PC-9 (cell line): ENCODE measurements at regions of chr3 and their contacts with region 1.

Region 1: GRCh38 chr3:25648107-25648535 is 16.6 kb downstream of the TOP2B start:
- DNase-seq: peak; percentile 48 to 53
- H3K4me3 ChIP-seq: no peak overlapping the region
- H3K27ac ChIP-seq: no peak overlapping the region
- H3K4me1 ChIP-seq: no peaks in the 10 kb centered on the region
- H3K27me3 ChIP-seq: no peaks in the 10 kb centered on the region
- CTCF ChIP-seq: peak; percentile 94

Region 2: DNA sequence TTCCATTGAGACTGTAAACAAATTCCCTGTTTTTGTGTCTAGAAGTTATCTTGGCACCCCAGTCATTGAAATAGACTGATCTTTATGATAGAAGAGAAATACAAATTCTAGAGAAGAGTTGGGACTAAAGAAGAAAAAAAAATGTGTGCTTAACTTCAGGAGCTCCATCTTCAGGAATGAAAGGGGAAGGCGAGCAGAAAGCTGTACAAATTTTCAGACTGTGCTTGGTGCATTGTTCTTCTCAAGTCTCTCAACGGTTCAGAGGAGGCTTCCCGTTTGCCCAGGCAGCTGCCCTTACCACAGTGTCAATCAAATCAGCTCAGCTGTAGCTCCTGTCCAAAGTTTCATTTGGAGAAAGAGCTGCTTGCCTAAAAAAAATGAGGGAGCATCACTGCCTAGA is 183.5 kb after region 1 on chr3:
- CTCF ChIA-PET with region 1: no interaction called
- POLR2A ChIA-PET with region 1: no interaction called
- intact Hi-C with region 1: loop called (anchors 5 kb)
- DNase-seq: no peak
- H3K4me3 ChIP-seq: no peak overlapping the region
- H3K27ac ChIP-seq: no peak overlapping the region
- H3K4me1 ChIP-seq: no peaks in the 10 kb centered on the region
- H3K27me3 ChIP-seq: no peaks in the 10 kb centered on the region
- CTCF ChIP-seq: no peak; the same call in 1 of the 2 replicates

Region 3: GRCh38 chr3:25856902-25857518 is 208.9 kb after region 1 on chr3:
- CTCF ChIA-PET with region 1: no interaction called
- POLR2A ChIA-PET with region 1: no interaction called
- intact Hi-C with region 1: loop called (anchors 2 kb)
- DNase-seq: no peak
- H3K4me3 ChIP-seq: no peak overlapping the region
- H3K27ac ChIP-seq: no peak overlapping the region
- H3K4me1 ChIP-seq: peaks cover 24% of the 10 kb centered on the region
- H3K27me3 ChIP-seq: no peaks in the 10 kb centered on the region
- CTCF ChIP-seq: peak; percentile 70

Region 4: DNA sequence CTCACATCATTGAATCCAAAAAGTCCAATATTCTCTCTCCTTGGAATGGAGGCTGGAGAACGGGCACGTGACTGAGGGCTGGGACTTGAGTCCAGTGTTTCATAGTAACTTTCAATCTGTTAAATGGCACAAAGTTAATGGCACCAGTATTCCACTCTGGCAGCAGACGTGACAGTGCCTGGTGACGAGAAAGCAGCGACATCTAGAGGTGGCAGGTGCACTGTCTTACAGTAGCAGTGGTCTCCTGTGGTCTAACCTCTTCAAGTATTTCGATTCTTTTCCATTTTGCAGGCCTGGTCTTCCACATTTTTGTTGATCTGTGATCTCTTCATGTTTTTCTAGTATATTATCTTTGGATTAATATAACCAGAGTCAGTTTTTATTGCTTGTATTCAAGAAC is 248.9 kb after region 1 on chr3:
- CTCF ChIA-PET with region 1: no interaction called
- POLR2A ChIA-PET with region 1: no interaction called
- intact Hi-C with region 1: loop called (anchors 1 kb)
- DNase-seq: peak in 1 of 2 experiments; percentile 27
- H3K4me3 ChIP-seq: no peak overlapping the region
- H3K27ac ChIP-seq: no peak overlapping the region
- H3K4me1 ChIP-seq: no peaks in the 10 kb centered on the region
- H3K27me3 ChIP-seq: no peaks in the 10 kb centered on the region
- CTCF ChIP-seq: peak; percentile 55; the same call in 1 of the 2 replicates

Region 5: DNA sequence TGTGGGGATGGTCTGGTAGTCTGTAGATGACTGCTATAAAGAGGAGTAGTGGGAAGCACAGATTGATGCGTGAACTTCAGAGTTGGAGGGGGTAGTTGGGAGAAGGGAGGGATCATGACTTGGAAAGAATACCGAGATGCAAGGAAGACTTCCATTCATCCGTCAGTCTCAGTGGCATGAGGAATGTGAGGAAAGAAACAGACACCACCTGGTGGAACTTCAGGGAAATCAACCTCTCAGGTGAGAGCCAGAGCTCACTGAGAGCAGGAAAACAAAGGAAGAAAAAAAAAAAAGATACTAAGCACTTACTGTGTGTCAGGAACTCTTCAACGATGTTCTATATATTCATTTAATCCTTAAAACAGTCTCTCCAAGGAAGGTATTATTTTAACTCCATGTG is 314.1 kb after region 1 on chr3:
- CTCF ChIA-PET with region 1: no interaction called
- POLR2A ChIA-PET with region 1: no interaction called
- intact Hi-C with region 1: loop called (anchors 5 kb)
- DNase-seq: peak; percentile 8 to 34
- H3K4me3 ChIP-seq: no peak overlapping the region
- H3K27ac ChIP-seq: no peak overlapping the region
- H3K4me1 ChIP-seq: no peaks in the 10 kb centered on the region
- H3K27me3 ChIP-seq: no peaks in the 10 kb centered on the region
- CTCF ChIP-seq: peak; percentile 57

Region 6: DNA sequence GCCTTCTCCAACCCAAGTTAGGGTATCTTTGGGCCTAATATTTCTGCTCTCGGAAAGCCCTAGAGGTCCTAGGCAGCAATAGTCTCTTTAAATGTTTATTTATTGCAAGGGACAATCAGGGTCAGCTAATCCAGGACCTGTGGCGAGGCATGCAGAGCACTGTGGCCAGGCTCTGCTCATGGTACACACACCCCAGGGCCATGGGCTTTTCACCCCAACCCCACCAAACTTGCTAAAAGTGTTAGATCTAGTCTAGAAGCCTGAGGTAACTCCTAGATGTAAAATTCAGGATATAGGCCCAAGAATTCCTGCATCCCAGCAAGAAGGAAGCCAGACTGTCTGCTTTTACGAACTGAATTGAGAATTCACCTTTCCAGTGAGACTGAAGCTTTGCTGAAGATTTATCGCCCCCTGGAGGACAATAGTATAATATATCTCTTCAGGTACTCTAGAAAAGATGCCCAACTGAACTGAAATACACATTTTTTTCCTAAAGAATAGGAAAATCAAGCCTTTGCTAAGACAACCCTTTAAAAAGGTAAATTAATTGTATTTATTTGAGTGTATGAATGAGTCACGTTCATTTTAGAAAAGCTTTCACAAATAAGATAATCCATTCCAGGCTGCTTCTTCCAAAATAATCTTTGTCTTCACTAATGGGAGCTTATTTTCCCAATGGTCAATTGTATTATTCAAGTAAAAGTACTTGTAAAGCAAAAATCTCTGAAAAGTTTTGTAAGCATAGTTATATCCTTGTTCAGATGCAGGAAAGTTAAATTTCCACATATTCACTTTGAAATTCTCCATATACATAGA is 1064.3 kb after region 1 on chr3:
- CTCF ChIA-PET with region 1: no interaction called
- POLR2A ChIA-PET with region 1: no interaction called
- intact Hi-C with region 1: loop called (anchors 5 kb)
- DNase-seq: peak in 1 of 2 experiments; percentile 2
- H3K4me3 ChIP-seq: no peak overlapping the region
- H3K27ac ChIP-seq: no peak overlapping the region
- H3K4me1 ChIP-seq: no peaks in the 10 kb centered on the region
- H3K27me3 ChIP-seq: no peaks in the 10 kb centered on the region
- CTCF ChIP-seq: peak; percentile 77